ENCODE measurements at regions of chr12 and their contacts with region 1.

Region 1: GRCh38 chr12:69415471-69416275 is 54.5 kb upstream of the FRS2 start:
- DNase-seq: peak in 6 of 10 donors; percentile 14 to 81 (median 51)

Region 2: DNA sequence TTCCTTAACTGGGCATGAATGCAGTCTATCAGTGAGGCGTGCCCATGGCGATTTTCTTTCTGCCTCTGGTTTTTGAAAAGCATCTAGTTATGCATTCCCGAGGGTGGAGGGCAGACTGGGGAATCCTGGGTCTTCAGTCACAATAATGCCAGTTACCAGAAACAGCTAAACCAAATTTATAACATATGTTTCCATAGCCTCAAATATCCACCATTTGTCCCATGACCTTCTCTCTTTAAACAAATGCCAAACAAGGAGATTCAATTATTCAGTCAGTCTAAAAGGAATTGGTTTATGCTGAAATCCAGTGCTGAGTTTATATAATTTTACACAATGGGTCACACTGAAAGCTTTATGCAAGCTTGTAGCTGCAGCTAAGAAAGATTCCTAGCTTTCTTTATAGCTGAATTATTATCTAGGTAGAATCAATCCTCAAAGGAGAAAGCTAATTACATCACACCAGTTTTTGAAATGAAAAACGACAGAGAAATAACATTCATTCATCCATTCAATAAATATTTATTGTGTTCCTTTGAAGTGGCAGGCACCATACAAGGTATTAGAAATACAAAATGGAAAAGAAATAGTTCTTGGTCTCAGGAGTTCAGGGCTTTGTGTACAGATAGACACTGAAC is 936.3 kb before region 1 on chr12:
- intact Hi-C with region 1: no loop called
- DNase-seq: no peak

Region 3: DNA sequence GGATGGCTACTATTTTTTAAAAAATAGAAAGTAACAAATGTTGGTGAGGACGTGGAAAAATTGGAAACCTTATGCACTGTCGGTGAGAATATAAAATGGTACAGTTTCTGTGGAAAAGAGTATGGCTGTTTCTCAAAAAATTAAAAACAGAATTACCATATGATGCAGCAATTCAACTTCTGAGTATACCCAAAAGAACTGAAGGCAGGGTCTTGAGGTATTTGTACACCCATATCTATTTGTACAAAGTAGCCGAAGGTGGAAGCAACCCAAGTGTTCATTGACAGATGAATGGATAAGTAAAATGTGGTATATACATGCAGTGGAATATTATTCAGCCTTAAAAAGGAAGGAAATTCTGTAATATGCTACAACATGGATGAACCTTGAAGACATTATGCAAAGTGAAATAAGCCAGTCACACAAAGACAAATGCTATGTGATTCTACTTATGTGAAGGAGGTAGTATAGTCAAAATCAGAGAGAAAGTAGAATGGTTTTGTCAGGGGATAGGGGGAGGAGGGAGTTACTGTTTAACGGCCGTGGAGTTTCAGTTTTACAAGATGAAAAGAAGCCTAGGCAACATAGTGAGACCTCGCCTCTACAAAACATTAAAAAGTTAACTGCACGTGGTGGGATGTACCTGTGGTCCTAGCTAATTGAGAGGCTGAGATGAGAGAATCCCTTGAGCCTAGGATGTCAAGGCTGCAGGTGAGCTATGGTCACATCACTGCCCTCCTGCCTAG is 131.2 kb after region 1 on chr12:
- intact Hi-C with region 1: no loop called
- DNase-seq: no peak

Region 4: GRCh38 chr12:69570545-69571399 is 155.1 kb after region 1 on chr12:
- intact Hi-C with region 1: loop called (anchors 2 kb)
- DNase-seq: peak in 4 of 10 donors; percentile 20 to 47 (median 32)

Region 5: GRCh38 chr12:69851976-69852375 is 436.3 kb after region 1 on chr12:
- intact Hi-C with region 1: no loop called
- DNase-seq: no peak